Dendritic cell treated with granulocyte-macrophage colony-stimulating factor and Interleukin-4, amounts not matched to agents 40 ng/mL and 50 ng/mL, for 4 days (primary cell): ENCODE measurements at regions of chr1 and their contacts with region 1.

Region 1: GRCh38 chr1:241896670-241896962 is 48.6 kb downstream of the EXO1 start:
- H3K4me3 Mint-ChIP-seq: no peak overlapping the region
- H3K27ac Mint-ChIP-seq: no peak overlapping the region
- H3K4me1 Mint-ChIP-seq: peaks cover 14% of the 10 kb centered on the region
- H3K27me3 Mint-ChIP-seq: no peaks in the 10 kb centered on the region

Region 2: DNA sequence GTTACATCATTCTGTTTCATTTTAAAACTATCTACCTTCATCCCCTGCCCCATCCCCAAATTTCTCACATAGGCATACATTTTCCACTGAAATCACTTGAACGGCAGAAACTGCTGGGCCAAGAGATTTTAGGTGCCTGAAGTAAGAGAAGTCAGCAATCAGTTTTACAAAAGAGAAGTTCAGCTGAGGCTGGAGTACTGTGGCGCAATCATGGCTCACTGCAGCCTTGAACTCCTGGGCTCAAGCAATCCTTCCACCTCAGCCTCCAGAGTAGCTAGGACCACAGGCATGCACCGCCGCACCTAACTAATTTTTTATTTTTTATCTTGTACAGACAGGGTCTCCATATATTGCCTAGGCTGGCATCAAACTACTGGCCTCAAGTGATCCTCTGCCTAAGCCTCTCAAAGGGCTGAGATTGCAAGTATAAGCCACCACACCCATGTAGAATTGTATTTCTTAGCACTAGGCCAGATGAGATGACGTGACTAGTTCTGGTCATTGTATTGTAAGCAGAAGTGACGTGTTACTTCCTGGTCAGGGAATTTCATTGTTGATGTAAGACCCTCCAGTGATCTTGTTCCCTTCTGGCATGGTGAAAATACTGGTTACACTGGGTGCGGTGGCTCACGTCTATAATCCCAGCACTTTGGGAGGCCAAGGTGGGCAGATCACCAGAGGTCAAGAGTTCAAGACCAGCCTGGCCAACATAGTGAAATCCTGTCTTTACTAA is 68.1 kb after region 1 on chr1:
- intact Hi-C with region 1: no loop called
- H3K4me3 Mint-ChIP-seq: no peak overlapping the region
- H3K27ac Mint-ChIP-seq: peak overlapping the region; percentile 92
- H3K4me1 Mint-ChIP-seq: peaks cover 5% of the 10 kb centered on the region
- H3K27me3 Mint-ChIP-seq: peaks cover 4% of the 10 kb centered on the region

Region 3: GRCh38 chr1:241985787-241986186 is 89.2 kb after region 1 on chr1:
- intact Hi-C with region 1: loop called (anchors 1 kb)
- H3K4me3 Mint-ChIP-seq: no peak overlapping the region
- H3K27ac Mint-ChIP-seq: no peak overlapping the region
- H3K4me1 Mint-ChIP-seq: peaks cover 18% of the 10 kb centered on the region
- H3K27me3 Mint-ChIP-seq: peaks cover under 1% of the 10 kb centered on the region

Region 4: DNA sequence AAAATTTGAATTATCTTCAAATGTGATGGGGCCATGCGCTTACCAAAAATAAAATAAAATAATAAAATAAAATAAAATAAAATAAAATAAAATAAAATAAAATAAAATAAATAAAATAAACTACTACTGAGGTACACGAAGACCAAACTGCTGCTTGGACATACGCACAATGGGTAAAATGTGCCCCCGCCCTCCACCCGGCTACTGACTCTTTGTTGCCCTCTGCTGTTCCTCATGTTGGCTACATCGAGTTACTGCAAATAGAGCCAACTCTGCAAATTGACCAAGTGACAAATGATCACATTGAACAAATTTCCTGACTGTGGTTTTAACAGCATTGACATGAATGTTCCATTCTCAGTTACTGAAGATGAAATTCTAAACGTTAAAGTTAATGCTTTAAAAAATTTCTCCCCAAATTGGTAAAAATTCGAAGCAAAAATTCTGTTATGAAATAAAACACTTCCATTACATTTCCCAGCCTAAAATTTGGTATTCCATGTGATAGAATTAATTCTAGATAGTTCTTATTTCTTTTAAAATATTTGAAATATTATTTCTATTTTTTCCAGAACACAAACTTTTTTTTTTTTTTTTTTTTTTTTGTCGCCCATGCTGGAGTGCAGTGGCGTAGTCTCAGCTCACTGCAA is 121.1 kb after region 1 on chr1:
- intact Hi-C with region 1: loop called (anchors 1 kb)
- H3K4me3 Mint-ChIP-seq: no peak overlapping the region
- H3K27ac Mint-ChIP-seq: no peak overlapping the region
- H3K4me1 Mint-ChIP-seq: no peaks in the 10 kb centered on the region
- H3K27me3 Mint-ChIP-seq: no peaks in the 10 kb centered on the region